Gastrocnemius medialis (tissue), 4 donors: ENCODE measurements at regions of chr5 and their contacts with region 1.

Region 1: GRCh38 chr5:53095931-53096525 is 13.5 kb downstream of the MOCS2 start:
- DNase-seq: peak in 1 of 2 donors; percentile 30
- ATAC-seq: peak in 1 of 2 donors; percentile 51
- H3K4me3 ChIP-seq: no peak overlapping the region
- H3K27ac ChIP-seq: no peak overlapping the region
- H3K4me1 ChIP-seq: no peaks in the 10 kb centered on the region
- H3K27me3 ChIP-seq: no peaks in the 10 kb centered on the region
- CTCF ChIP-seq: peak; percentile 49 to 89 (median 67)
- POLR2A ChIP-seq: no peak

Region 2: GRCh38 chr5:52948418-52949076 is 147.5 kb before region 1 on chr5:
- in situ Hi-C with region 1: loop called in 3 of 4 experiments (anchors 5 to 10 kb)
- intact Hi-C with region 1: loop called (anchors 2 kb)
- DNase-seq: no peak
- ATAC-seq: peak in 1 of 2 donors; percentile 62
- H3K4me3 ChIP-seq: no peak overlapping the region
- H3K27ac ChIP-seq: no peak overlapping the region
- H3K4me1 ChIP-seq: no peaks in the 10 kb centered on the region
- H3K27me3 ChIP-seq: no peaks in the 10 kb centered on the region
- CTCF ChIP-seq: peak; percentile 26 to 62 (median 54)
- POLR2A ChIP-seq: no peak

Region 3: DNA sequence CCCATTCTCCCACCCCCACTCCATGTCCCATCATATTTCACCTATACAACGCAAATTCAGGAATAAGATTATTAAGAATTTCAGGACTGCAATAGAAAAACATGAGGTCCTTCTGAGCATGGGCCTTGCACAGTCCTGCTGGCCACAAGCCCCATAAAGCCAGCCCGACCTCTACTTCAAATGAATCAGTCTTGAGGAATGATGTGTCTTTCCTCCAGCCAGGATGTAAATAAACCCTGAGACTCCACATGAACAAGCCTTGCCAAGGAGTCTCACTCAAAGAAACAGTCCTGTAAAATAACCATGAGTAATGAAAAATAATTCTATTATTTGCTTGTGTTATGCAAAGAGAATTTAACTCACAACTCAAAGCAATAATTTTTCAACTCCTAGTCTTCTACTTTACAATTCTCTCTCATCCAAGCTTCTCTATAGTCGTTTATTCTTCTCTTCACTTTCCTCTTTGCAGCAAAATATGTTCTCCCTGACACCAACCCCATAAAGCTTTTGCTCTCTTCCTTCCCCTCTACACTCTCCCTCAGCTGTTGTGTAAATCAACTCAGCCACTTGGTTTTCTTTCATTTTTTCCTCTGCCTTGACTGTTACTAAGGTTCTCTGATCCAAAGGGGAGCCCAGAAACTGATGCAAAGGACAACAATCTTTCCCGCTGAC is 153.6 kb after region 1 on chr5:
- in situ Hi-C with region 1: no loop called
- intact Hi-C with region 1: no loop called
- DNase-seq: no peak
- ATAC-seq: no peak
- H3K4me3 ChIP-seq: no peak overlapping the region
- H3K27ac ChIP-seq: no peak overlapping the region
- H3K4me1 ChIP-seq: no peaks in the 10 kb centered on the region
- H3K27me3 ChIP-seq: no peaks in the 10 kb centered on the region
- CTCF ChIP-seq: no peak
- POLR2A ChIP-seq: no peak